Prostate gland (tissue), 2 donors: ENCODE measurements at regions of chr13 and their contacts with region 1.

Region 1: DNA sequence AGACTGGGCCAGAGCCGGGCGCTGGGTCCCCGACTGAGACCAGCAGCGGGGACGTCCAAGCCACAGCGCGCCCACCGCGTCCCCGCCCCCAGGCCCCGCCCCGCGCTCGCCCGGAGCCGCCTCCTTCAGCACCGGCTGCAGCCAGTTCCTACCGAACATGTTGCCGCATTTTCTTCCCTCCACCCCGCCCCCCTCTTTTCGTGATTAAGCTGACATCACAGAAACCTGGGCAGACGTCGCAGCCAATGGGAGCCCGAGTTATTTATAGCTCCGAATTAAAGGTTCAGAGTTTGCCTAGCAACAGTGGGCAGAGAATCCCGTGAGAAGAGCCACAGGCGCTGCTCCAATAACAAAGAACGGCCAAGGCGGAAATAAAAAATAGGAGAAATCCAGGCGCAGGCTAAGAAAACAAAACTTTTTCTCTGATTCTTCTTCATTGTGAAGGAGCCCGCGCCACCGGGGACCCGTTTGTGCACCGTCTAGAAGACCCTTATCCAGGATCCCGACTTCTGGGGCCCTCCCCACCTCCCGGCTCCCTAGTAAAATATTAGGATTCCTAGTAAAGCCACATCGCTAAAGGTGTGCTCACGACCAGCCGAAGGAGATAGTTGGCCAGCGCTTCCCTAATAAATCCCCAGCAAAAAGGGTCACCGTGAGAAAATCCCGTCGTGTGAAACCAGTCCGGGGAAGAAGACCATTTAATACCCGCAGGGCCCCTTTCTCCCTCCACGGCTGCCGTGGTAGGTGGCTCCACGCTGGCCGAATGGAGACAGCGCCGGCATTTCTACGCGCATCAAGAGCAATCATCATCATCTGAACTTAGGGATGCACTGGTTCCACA is 61.7 kb downstream of the SERP2 start:
- DNase-seq: peak; percentile 99
- H3K4me3 ChIP-seq: peak overlapping the region; percentile 43 to 72
- H3K27ac ChIP-seq: peak overlapping the region; percentile 94 to 98
- H3K4me1 ChIP-seq: peaks cover 3% of the 10 kb centered on the region
- H3K27me3 ChIP-seq: no peaks in the 10 kb centered on the region
- CTCF ChIP-seq: no peak
- POLR2A ChIP-seq: peak; percentile 91

Region 2: GRCh38 chr13:44050450-44051063 is 384.8 kb before region 1 on chr13:
- intact Hi-C with region 1: loop called (anchors 5 kb)
- DNase-seq: no peak
- H3K4me3 ChIP-seq: no peak overlapping the region
- H3K27ac ChIP-seq: peak overlapping the region in 1 of 2 donors; percentile 15
- H3K4me1 ChIP-seq: no peaks in the 10 kb centered on the region
- H3K27me3 ChIP-seq: no peaks in the 10 kb centered on the region
- CTCF ChIP-seq: peak; percentile 50 to 86 (median 72)
- POLR2A ChIP-seq: no peak

Region 3: DNA sequence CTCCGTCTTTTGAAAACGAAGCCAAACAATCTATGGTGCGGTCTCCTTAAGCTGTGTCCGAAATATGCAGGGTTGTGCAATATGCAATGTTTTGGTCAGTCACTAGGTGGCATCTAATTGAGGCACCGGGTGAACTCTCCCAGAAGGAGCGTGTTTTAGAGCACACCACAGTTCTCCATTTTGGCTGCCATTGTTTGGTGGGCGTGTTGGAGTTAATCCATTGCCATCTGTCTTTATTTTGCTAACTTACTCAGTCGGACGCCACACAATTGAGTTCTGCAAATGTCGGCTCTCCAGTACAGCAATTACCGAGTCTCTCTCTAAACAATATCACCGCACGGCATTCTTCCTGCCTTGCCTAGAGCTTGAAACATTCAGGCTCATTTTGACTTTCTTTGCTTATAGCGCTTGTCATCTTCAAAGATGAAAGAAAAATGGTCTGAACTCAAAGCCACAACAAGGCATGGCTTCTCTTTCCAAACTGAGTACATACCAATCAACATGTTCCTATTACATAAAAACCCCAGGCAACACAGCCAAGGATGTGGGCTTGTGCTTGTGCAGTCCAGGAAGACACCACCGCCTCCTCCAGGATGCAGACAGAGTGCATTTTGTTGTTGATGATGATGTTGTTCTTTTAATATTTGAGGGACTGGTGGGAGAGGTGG is 243.7 kb before region 1 on chr13:
- intact Hi-C with region 1: loop called (anchors 10 kb)
- DNase-seq: peak; percentile 56
- H3K4me3 ChIP-seq: no peak overlapping the region
- H3K27ac ChIP-seq: peak overlapping the region; percentile 37 to 57
- H3K4me1 ChIP-seq: no peaks in the 10 kb centered on the region
- H3K27me3 ChIP-seq: no peaks in the 10 kb centered on the region
- CTCF ChIP-seq: peak; percentile 45 to 93 (median 72)
- POLR2A ChIP-seq: no peak

Region 4: DNA sequence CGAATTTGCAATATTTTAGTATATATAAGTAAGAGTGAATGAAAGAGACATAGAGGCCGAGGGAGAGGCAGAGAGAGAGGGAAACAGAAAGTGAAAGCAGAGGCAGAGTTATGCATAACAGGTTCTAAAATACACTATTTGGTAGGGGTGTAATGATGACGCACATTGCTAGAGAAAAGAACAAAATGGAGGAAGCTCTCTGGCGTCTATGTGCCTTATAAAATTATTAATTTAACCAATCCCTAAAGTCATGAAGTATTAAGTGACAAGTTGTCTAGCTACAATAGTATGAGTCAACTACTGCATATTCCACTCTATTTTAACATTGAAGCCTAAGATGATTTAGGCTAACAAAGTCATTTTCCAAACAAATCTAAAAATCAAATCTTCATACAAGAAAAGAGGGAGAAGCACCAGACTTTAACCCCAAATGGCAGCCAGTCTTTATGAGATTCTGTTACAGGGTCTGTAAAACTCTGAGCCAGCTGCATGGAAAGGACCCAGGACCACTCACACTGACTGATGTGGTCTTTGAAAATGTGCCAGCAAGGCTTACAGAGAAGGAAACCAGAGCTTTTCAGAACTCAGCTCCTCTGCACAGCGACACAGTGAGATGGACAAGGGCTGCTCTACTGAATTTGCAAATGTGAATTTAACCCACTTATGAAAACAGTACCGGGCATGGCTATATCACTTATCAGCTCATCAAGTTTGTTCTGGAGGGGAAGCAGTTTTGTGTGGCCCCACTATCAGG is 160.7 kb before region 1 on chr13:
- intact Hi-C with region 1: loop called (anchors 5 kb)
- DNase-seq: peak; percentile 66
- H3K4me3 ChIP-seq: no peak overlapping the region
- H3K27ac ChIP-seq: peak overlapping the region; percentile 85 to 87
- H3K4me1 ChIP-seq: peaks cover 13% of the 10 kb centered on the region
- H3K27me3 ChIP-seq: no peaks in the 10 kb centered on the region
- CTCF ChIP-seq: no peak
- POLR2A ChIP-seq: no peak

Region 5: DNA sequence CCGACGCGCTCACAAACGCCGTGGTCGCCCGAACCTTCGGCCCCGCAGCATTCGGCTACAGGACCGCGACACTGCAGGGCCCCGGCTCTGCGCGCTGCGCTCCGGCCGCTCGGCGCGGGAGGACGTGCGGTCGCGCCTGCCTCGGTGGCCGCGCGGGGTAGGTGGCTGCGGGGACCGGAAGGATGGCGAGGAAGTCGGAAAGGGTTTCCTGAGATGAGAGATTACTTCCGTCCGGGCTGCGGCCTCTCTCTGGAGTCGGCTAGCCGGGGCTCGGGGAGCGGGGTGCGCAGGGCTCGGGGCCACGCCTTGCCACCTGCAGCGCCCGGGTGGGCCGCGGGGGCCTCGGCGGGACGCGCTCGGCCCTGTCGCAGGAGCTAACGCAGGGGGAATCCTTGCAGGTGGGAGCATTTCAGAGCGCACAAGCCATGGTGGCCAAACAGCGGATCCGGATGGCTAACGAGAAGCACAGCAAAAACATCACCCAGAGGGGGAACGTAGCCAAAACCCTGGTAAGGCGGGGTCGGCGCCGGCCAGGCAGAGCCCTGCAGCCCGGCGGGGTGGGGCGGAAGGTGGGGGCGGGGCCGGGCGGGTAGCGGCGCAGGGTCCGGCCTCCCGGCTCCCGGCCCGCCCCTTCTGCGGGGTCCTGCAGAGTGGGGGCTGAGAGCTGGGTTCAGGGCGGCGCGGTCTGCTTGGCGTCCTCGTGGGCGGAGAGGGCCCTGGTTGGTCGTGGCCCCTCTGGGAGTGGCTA is 61.6 kb before region 1 on chr13 and contains the start of gene SERP2:
- intact Hi-C with region 1: loop called (anchors 2 kb)
- DNase-seq: no peak
- H3K4me3 ChIP-seq: peak within 1 kb of the TSS; percentile 46 to 55
- H3K27ac ChIP-seq: peak within 1 kb of the TSS; percentile 57 to 67
- H3K4me1 ChIP-seq: no peaks in the 10 kb centered on the region
- H3K27me3 ChIP-seq: no peaks in the 10 kb centered on the region
- CTCF ChIP-seq: no peak
- POLR2A ChIP-seq: no peak
- total RNA-seq, gene SERP2: 3.3 to 14.5 TPM